ENCODE measurements at regions of chr21 and their contacts with region 1.

Region 1: DNA sequence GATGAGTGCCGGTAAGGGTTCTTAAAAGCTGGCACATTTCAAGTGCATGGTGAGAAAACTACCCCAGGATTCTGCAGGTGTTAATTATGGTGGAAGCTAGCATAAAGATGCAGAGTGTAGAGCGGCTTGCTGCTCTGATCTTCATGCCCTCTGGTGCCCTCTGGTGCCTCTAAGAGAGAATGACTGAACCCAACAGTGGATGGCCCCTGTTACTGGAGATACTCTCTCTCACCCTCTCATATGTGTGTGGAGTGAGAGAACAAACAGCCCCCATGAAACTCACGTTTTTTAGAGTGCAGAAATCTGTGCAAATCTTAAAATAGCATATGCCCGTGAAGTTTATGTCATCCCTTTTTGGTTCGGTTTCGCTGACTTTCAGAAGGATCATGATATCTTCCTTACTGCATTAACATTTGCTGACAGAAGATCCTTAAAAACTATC is 90.0 kb downstream of the GRIK1 start:
- DNase-seq: peak; percentile 33 to 55
- H3K4me3 ChIP-seq: no peak overlapping the region
- H3K27ac ChIP-seq: no peak overlapping the region
- H3K4me1 ChIP-seq: no peaks in the 10 kb centered on the region; a peak in 2 of 7 replicates
- H3K27me3 ChIP-seq: no peaks in the 10 kb centered on the region
- CTCF ChIP-seq: peak; percentile 62 to 85 (median 75)
- EP300 ChIP-seq: no peak
- POLR2A ChIP-seq: no peak
- RAD21 ChIP-seq: peak; percentile 89 to 90

Region 2: GRCh38 chr21:29832217-29832616 is 17.5 kb before region 1 on chr21:
- CTCF ChIA-PET with region 1: interaction called, 10 read pairs
- POLR2A ChIA-PET with region 1: no interaction called
- DNase-seq: no peak
- H3K4me3 ChIP-seq: no peak overlapping the region
- H3K27ac ChIP-seq: no peak overlapping the region
- H3K4me1 ChIP-seq: no peaks in the 10 kb centered on the region
- H3K27me3 ChIP-seq: no peaks in the 10 kb centered on the region
- CTCF ChIP-seq: no peak
- EP300 ChIP-seq: no peak
- POLR2A ChIP-seq: no peak
- RAD21 ChIP-seq: no peak

Measured in H1 (cell line).